Heart right ventricle (tissue), 16 donors: ENCODE measurements at regions of chr9 and their contacts with region 1.

Region 1: GRCh38 chr9:127525401-127526187 is 74.3 kb downstream of the LRSAM1 start:
- DNase-seq: peak in 1 of 2 donors; percentile 26
- ATAC-seq: peak in 3 of 8 donors; percentile 28 to 72 (median 32)
- H3K4me3 ChIP-seq: no peak overlapping the region
- H3K27ac ChIP-seq: peak overlapping the region; percentile 33 to 94 (median 47)
- H3K4me1 ChIP-seq: peaks cover 30 to 94% (median 65%) of the 10 kb centered on the region in 9 donors
- H3K27me3 ChIP-seq: no peaks in the 10 kb centered on the region
- CTCF ChIP-seq: peak; percentile 10 to 70 (median 50)

Region 2: DNA sequence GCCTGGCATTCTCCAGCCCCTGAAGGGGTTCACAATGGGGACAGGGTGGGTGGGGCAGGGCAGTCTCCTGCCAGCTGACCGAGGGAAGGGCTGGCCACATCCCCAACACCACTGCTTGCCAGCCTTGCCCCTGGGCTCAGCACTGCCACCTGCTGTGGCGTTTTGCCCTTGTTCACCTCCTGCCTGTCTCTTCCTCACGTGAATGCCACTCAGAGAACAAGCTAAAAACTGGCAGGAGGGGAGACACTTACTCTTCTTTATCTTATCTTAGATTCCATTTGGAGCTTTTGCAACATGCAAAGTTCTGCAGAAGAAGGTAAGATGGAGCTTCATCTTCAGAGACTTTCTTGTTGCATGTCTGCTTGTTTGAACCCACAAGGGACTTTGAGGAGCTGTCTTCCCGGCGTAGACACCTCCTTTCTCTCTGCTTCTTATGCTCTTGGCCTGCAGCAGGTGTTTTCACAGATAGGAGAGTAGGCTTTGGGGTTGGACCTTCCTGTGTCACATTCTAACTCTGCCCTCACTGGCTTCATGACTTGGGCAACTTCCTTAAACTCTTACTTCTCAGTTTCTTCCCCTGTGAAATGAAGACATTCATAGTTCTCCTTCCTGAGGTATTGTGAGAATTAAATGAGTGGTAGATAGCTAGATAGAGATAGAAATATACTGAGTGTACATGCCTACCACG is 70.1 kb before region 1 on chr9:
- intact Hi-C with region 1: no loop called
- DNase-seq: peak in 1 of 2 donors; percentile 46
- ATAC-seq: no peak
- H3K4me3 ChIP-seq: no peak overlapping the region
- H3K27ac ChIP-seq: peak overlapping the region in 3 of 10 donors; percentile 20 to 63 (median 39)
- H3K4me1 ChIP-seq: peaks cover 0 to 40% (median 31%) of the 10 kb centered on the region in 9 donors
- H3K27me3 ChIP-seq: no peaks in the 10 kb centered on the region
- CTCF ChIP-seq: peak in 7 of 9 donors; percentile 34 to 53 (median 45)

Region 3: GRCh38 chr9:127568971-127569885 is 43.6 kb after region 1 on chr9:
- intact Hi-C with region 1: loop called in 7 of 10 experiments (anchors 2 to 5 kb)
- DNase-seq: peak; percentile 79 to 87
- ATAC-seq: peak; percentile 89 to 92 (median 90)
- H3K4me3 ChIP-seq: peak overlapping the region; percentile 55 to 93 (median 88)
- H3K27ac ChIP-seq: peak overlapping the region; percentile 81 to 96 (median 94)
- H3K4me1 ChIP-seq: peaks cover 4 to 67% (median 37%) of the 10 kb centered on the region in 9 donors
- H3K27me3 ChIP-seq: peaks cover 0 to 8% (median 0%) of the 10 kb centered on the region in 7 donors
- CTCF ChIP-seq: no peak

Region 4: DNA sequence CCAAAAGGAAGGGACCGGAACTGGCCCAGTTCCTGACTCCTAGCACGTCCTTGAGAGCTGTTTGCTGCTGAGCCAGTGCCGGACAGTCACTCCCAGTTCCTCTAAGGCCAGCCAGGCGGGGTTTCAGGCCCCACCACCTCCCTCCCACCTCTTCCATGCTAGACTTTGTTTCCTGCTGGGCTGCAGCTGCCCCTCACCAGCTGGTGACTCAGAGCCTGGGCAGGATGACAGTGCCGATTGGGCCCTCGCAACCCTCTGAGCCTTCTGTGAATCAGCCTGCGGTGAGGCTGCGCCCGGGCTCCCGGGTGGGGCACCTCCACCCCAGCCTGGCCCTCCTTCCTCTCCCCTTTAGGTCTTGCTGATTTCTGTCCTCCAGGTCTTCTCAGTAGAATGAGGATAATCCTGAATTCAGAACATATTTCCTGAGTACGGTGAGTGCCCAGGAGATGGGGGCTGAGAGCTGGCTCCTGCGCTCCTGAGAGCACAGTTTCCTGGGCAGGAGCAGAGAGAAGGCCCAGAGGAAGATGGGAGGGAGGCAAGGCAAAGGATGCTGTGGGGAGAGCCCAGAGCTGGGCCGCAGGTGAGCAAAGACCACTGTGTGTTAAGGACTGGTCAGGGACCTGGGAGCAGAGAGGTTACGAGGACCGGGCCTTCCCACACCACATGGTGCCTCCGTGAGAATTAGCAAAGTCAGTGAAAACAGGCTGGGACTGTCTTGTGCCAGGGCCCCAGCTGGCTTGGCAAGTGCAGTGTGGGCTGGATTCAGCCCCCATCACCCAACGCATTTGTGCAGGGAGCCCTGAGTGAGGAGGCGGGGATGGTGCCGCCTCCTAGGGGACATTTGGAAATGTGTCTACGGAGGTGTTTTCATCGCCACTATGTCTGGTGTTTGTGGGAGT is 53.6 kb after region 1 on chr9:
- intact Hi-C with region 1: loop called in 2 of 10 experiments (anchors 2 to 5 kb)
- DNase-seq: peak; percentile 83 to 85
- ATAC-seq: peak; percentile 92 to 96 (median 94)
- H3K4me3 ChIP-seq: peak overlapping the region in 8 of 10 donors; percentile 12 to 46 (median 30)
- H3K27ac ChIP-seq: peak overlapping the region; percentile 47 to 92 (median 85)
- H3K4me1 ChIP-seq: peaks cover 10 to 58% (median 17%) of the 10 kb centered on the region in 9 donors
- H3K27me3 ChIP-seq: no peaks in the 10 kb centered on the region
- CTCF ChIP-seq: peak in 7 of 9 donors; percentile 28 to 51 (median 32)